IMR-90 (cell line): ENCODE measurements at regions of chr22 and their contacts with region 1.

Region 1: DNA sequence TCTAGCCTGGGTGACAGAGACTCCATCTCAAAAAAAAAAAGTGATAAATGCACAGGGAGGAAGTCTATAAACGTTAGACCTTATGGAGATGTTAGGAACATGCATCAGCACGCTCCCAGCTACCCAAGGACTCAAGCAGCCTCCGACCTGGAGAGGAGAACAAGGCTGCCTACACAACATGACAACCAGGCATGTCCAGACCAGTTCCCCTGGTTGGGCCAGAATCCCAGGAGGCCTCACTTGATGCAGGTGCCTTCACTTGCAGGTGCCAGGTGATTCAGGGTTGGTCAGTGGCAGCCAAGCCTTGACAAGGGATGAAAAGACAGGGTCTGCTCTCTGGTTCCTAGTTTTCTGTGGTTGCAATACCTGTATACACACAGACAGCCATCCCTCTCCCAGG is 5.9 kb downstream of the RANGAP1 start:
- DNase-seq: no peak
- ATAC-seq: no peak
- H3K4me3 ChIP-seq: no peak overlapping the region
- H3K27ac ChIP-seq: peak overlapping the region; percentile 63; the same call in 1 of the 2 replicates
- H3K4me1 ChIP-seq: peaks cover 5% of the 10 kb centered on the region; the same call in 1 of the 2 replicates
- H3K27me3 ChIP-seq: no peaks in the 10 kb centered on the region
- CTCF ChIP-seq: no peak
- POLR2A ChIP-seq: no peak
- RAD21 ChIP-seq: no peak

Region 2: DNA sequence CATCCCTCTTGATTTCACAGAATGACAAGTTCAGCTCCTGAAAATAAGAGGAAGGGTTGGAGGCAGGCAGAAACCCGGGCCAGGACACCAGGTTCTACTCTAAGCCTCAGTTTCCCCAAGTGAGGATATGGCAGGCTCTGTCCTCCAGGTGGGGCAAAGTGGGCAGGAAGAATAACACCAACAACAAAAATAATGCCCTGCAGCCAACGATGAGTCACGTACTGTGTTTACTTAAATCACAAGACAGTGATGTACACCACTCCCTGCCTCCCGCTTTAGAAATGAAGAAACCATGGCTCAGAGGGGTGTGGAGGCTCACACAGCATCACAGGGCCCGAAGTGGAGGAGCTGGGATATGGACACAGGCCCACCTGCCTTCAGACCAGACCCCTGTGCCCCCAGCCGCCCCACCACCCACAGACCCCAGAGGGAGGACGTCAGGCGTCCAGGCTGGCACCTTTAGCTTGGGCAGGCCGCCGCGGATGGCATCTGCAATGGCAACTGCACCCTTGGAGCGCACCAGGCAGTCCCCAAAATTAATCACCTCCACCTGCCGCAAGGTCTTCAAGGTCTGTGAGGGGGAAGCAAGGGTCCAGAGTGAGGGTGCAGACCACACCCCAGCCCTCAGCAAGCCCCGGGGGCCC is 23.7 kb before region 1 on chr22:
- CTCF ChIA-PET with region 1: no interaction called
- POLR2A ChIA-PET with region 1: interaction called, 12 read pairs
- dilution Hi-C with region 1: no loop called
- in situ Hi-C with region 1: no loop called
- intact Hi-C with region 1: no loop called
- DNase-seq: peak; percentile 80
- ATAC-seq: peak; percentile 77
- H3K4me3 ChIP-seq: no peak overlapping the region
- H3K27ac ChIP-seq: peak overlapping the region; percentile 6; the same call in 1 of the 2 replicates
- H3K4me1 ChIP-seq: peaks cover 14% of the 10 kb centered on the region
- H3K27me3 ChIP-seq: no peaks in the 10 kb centered on the region
- CTCF ChIP-seq: peak; percentile 31
- POLR2A ChIP-seq: no peak
- RAD21 ChIP-seq: peak; percentile 20; the same call in 1 of the 2 replicates

Region 3: GRCh38 chr22:41576877-41577276 is 296.8 kb after region 1 on chr22:
- CTCF ChIA-PET with region 1: no interaction called
- POLR2A ChIA-PET with region 1: no interaction called
- dilution Hi-C with region 1: no loop called
- in situ Hi-C with region 1: no loop called
- intact Hi-C with region 1: no loop called
- DNase-seq: peak; percentile 52
- ATAC-seq: peak; percentile 52
- H3K4me3 ChIP-seq: no peak overlapping the region
- H3K27ac ChIP-seq: no peak overlapping the region
- H3K4me1 ChIP-seq: peaks cover 7% of the 10 kb centered on the region; the same call in 1 of the 2 replicates
- H3K27me3 ChIP-seq: no peaks in the 10 kb centered on the region
- CTCF ChIP-seq: peak; percentile 64
- POLR2A ChIP-seq: no peak
- RAD21 ChIP-seq: peak; percentile 59

Region 4: DNA sequence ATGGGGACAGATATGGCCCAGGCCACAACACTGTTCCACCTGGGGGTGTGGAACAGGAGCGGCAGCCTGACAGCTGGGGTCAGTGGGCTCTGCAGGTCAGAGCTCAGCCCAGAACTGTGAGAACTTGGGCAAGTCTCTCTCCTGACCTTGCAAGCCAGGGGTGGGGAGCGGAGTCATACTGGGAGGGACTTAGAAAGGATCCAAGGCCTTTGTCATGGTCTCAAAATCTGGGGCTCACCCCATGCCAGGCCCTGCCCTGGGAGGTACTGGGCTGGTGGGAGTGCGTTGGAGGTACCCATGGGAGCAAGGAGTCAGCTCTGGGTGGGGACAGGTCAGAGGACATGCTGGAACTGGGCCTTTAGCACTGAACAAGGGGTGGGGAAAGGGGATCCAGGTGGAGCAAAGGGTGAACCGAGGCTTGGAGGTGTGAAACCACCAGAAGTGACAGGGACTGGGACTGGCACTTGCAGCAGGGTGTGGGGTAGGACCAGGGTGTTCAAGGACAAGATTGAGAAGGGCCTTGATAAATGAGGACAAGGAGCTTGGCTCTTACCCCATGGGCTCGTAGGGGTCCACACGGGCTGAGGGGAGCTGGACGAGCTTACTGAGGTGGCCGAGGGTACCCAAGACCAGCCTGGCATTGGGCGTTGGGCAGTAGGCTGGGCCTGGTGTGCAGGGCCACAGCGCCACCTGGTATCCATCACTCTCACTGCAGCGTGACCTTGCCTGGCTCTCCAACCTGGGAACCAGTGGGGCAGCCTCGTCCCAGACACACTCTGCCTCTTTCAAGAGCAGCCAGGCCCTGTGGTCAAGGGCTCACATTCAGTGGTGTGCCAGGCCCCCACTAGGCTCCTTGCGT is 316.9 kb after region 1 on chr22:
- CTCF ChIA-PET with region 1: no interaction called
- POLR2A ChIA-PET with region 1: no interaction called
- dilution Hi-C with region 1: no loop called
- in situ Hi-C with region 1: no loop called
- intact Hi-C with region 1: no loop called
- DNase-seq: peak; percentile 37
- ATAC-seq: peak; percentile 75
- H3K4me3 ChIP-seq: no peak overlapping the region
- H3K27ac ChIP-seq: no peak overlapping the region
- H3K4me1 ChIP-seq: peaks cover 14% of the 10 kb centered on the region
- H3K27me3 ChIP-seq: no peaks in the 10 kb centered on the region
- CTCF ChIP-seq: peak; percentile 74
- POLR2A ChIP-seq: no peak
- RAD21 ChIP-seq: peak; percentile 86